Cardiac septum (tissue), 1 donor: ENCODE measurements at regions of chr11 and their contacts with region 1.

Region 1: DNA sequence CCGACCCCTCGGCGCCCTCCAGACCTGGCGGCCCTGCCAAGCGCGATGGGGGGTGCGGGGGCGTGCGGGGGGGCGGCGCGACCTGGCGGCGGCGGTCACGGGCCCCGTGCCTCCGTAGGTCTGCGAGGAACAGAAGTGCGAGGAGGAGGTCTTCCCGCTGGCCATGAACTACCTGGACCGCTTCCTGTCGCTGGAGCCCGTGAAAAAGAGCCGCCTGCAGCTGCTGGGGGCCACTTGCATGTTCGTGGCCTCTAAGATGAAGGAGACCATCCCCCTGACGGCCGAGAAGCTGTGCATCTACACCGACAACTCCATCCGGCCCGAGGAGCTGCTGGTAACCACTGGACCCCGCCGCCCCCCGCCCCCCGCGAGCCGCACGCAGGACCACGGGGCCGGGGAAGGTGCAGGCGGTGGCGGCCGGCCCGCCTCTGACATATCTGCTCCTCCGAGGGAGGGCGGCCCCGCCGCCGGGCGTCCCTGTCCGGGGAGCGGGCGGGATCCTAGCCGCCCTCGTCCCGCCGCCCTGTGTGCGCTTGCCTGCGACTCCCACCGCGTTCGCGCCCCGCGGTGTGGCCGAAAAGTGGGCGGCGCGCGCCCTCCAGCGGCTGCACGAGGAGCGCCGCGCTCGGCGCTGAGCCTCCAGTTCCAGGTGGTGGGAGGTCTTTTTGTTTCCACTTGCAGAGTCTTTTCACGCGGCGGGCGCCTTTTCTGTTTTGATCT is 2.1 kb downstream of the CCND1 start:
- DNase-seq: peak; percentile 89

Region 2: GRCh38 chr11:69101115-69101791 is 541.8 kb before region 1 on chr11:
- intact Hi-C with region 1: loop called (anchors 1 kb)
- DNase-seq: no peak

Region 3: DNA sequence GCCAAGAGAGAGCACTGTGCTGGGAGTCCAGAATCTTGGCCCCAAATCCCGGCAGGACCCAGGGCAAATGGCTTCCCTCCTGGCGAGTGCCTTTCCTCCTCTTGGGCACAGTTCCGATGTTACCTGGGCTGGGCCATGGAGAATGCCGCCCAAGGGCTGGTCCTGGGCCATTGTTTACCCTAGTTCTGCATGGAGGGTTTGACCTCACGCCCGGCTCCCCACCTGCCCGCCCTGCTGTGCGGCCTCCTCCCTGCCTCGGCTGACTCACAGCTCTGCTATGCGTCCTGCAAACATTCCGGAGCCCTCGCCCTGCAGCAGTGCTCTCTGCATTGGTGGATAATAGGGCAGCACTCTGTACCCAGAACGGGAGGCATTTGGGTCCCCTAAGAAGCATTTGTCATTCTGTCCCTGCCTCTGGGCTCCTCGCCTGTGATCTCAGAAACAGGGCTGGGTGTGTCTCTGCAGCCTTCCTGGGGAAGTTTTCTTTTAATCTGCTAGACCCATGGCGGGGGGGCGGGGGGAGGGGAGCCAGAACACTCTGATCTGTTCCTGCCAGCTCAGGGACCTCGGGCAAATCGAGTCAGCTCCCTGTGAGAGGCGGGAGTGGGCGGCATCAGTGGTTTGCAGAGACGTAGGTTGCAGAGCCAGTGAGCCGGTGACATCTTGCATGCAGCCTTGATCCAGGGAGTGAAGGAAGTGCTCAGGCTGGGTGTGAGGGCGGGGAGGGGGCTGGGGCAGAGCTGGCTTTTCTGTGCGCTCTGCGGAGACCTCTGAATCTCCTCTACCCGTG is 520.2 kb before region 1 on chr11:
- intact Hi-C with region 1: loop called (anchors 5 kb)
- DNase-seq: no peak

Region 4: GRCh38 chr11:69157156-69157821 is 485.8 kb before region 1 on chr11:
- intact Hi-C with region 1: loop called (anchors 5 kb)
- DNase-seq: no peak

Region 5: DNA sequence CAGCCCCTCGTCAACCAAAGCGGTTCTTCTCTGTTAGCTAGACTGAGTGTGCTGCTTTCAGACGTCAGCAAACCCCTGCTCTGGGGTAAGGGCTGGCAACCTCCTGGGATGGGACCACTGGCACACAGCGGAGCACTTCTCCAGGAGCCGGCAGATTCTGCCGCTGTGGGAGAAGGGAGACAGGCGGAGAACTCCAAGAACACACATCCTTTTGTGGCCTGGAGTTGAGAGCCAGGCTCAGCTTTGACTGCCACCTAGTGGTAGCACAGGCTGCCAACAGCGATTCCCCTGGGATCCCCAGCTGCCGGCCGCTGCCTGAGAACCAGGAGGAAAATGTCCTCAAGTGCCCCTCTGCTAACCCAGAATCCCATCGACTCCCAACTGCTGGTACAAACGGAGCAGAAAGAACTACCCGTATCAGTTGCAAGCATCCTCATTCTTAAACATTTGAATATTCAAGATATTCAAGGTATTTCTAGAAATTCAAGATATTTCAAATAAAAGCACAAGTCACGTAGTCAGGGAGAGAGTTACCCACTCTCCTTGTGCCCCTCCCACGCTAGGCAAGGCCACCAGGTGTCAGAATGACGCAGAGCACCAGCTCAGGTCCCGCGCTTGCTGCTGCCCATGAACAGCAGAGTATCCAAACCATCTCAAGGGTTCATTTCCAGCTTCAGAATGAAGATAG is 27.2 kb after region 1 on chr11:
- intact Hi-C with region 1: no loop called
- DNase-seq: peak; percentile 91